HCT116 (cell line): ENCODE measurements at regions of chr10 and their contacts with region 1.

Region 1: GRCh38 chr10:3785257-3785850 is 345 bp upstream of the KLF6 start:
- DNase-seq: peak; percentile 91
- ATAC-seq: peak; percentile 81
- H3K4me3 ChIP-seq: peak overlapping the region; percentile 89 to 91
- H3K27ac ChIP-seq: peak overlapping the region; percentile 98
- H3K4me1 ChIP-seq: peaks cover 35 to 63% of the 10 kb centered on the region in 2 experiments
- H3K27me3 ChIP-seq: no peaks in the 10 kb centered on the region
- CTCF ChIP-seq: no peak
- POLR2A ChIP-seq: peak; percentile 82
- RAD21 ChIP-seq: no peak

Region 2: GRCh38 chr10:3797750-3798149 is 12.4 kb after region 1 on chr10:
- CTCF ChIA-PET with region 1: no interaction called
- POLR2A ChIA-PET with region 1: interaction called, 17 read pairs
- RAD21 ChIA-PET with region 1: no interaction called
- intact Hi-C with region 1: no loop called
- DNase-seq: no peak
- ATAC-seq: no peak
- H3K4me3 ChIP-seq: no peak overlapping the region
- H3K27ac ChIP-seq: no peak overlapping the region
- H3K4me1 ChIP-seq: peaks cover 0 to under 1% of the 10 kb centered on the region in 2 experiments; a peak in 1 of 4 replicates
- H3K27me3 ChIP-seq: no peaks in the 10 kb centered on the region
- CTCF ChIP-seq: no peak
- POLR2A ChIP-seq: no peak
- RAD21 ChIP-seq: no peak

Region 3: DNA sequence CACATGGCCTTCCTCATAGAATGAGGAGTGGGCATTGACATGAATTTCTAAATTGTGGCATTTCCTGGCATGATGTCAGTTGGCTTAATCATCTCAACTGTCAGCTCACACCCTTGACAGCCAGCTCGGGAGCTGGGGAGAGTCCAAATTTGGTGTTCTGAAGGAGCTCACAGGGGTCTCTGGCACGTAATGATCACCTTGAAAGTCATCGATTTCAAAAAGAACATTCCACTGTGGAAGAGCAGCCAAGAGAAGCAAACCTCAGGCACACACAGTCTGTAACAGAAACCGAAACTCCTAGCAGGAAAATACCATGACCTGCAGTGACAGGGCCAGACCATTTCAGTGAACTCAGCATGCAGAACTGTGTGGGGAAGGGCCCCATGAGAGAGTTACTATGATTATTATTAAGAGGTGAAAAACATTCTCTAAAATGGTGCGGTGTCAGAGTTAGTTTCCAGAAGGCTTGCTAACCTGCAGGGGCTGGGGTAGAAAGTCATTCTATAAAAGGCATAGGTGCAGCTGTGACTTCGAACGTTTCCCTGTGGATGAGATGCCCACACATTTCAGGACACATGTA is 26.0 kb after region 1 on chr10:
- CTCF ChIA-PET with region 1: interaction called, 3 read pairs
- POLR2A ChIA-PET with region 1: interaction called, 83 read pairs
- RAD21 ChIA-PET with region 1: interaction called in 1 of 2 experiments, 3 read pairs
- intact Hi-C with region 1: no loop called
- DNase-seq: no peak
- ATAC-seq: no peak
- H3K4me3 ChIP-seq: peak overlapping the region in 1 of 2 experiments; percentile 37; a peak in 2 of 4 replicates
- H3K27ac ChIP-seq: peak overlapping the region; percentile 78
- H3K4me1 ChIP-seq: peaks cover 43 to 68% of the 10 kb centered on the region in 2 experiments
- H3K27me3 ChIP-seq: no peaks in the 10 kb centered on the region
- CTCF ChIP-seq: no peak
- POLR2A ChIP-seq: no peak
- RAD21 ChIP-seq: no peak

Region 4: DNA sequence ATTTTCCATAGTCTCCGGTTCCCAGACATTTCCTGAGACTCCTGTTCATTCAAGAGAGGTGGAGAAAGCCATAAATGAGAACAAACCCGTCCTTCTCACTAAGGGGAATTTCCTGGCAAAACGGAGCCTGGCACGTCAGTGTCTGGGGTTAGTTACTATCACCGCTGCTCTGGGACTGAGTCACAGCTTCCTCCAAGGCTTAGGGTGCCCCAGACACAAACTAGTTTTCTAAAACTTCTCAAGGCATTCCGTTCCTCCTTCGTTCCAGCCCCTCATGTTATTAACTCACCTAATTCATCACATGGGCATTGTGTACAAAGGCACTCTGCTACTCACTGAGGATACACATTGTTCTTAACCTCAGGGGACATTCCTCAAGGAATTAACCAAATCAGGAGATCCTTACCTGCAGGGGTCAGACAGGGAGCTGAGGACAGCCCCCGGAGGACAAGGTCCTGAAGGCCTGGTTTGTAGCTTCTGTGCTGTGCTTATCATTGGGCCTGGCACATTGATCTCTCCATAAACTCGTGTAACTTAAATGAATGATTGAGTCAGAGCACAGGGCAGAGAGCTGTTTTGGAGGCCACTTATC is 102.6 kb after region 1 on chr10:
- CTCF ChIA-PET with region 1: no interaction called
- POLR2A ChIA-PET with region 1: interaction called, 22 read pairs
- RAD21 ChIA-PET with region 1: no interaction called
- intact Hi-C with region 1: no loop called
- DNase-seq: no peak
- ATAC-seq: peak; percentile 35
- H3K4me3 ChIP-seq: peak overlapping the region in 1 of 2 experiments; percentile 7; a peak in 1 of 4 replicates
- H3K27ac ChIP-seq: peak overlapping the region; percentile 49; the same call in 1 of the 2 replicates
- H3K4me1 ChIP-seq: peaks cover 27 to 65% of the 10 kb centered on the region in 2 experiments
- H3K27me3 ChIP-seq: no peaks in the 10 kb centered on the region
- CTCF ChIP-seq: peak in 1 of 3 experiments; percentile 10; a peak in 1 of 6 replicates
- POLR2A ChIP-seq: no peak
- RAD21 ChIP-seq: 0 out of 2 replicates have a peak, but pooled peaks have one; percentile 7

Region 5: GRCh38 chr10:4151466-4151865 is 366.1 kb after region 1 on chr10:
- CTCF ChIA-PET with region 1: interaction called, 3 read pairs
- POLR2A ChIA-PET with region 1: interaction called, 8 read pairs
- RAD21 ChIA-PET with region 1: no interaction called
- intact Hi-C with region 1: loop called (anchors 10 kb)
- DNase-seq: no peak
- ATAC-seq: peak; percentile 66
- H3K4me3 ChIP-seq: no peak overlapping the region
- H3K27ac ChIP-seq: no peak overlapping the region
- H3K4me1 ChIP-seq: peaks cover 0 to 4% of the 10 kb centered on the region in 2 experiments; a peak in 3 of 4 replicates
- H3K27me3 ChIP-seq: no peaks in the 10 kb centered on the region
- CTCF ChIP-seq: peak; percentile 19 to 51 (median 39); a peak in 5 of 6 replicates
- POLR2A ChIP-seq: no peak
- RAD21 ChIP-seq: peak; percentile 59

Region 6: DNA sequence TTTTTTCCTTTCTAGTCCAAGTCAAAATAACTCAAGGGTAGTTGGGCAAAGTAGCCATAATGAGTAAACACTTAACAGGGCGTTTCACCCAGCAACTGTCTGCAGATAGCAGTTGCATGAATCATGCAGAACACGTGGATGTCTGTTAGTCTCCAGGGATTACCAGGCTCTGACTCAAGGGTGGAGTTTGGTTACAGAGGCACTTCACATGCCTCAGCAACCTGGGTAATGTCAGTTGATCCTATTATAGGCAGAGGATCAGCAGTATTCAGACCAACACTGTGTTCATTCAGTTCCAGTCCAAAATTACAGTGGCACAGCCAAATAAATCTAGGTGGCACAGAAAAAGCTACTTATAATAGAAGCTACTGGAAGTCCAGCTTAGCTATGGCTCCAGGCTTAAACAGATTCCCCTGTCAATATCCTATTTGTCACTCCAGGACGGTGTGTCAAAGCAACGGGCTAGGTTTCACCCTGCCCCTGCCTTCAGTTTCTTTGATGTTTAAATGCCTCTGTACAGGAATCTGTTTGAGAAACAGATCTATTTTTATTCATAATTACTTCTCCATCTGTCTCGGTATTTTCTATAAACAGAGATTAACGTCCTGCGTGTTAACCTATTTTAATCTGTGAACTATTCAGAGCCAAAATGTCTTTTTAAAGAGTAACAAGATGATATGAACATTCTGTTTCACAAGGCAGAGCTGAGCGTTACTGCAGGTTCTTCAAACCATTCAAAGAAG is 878.0 kb after region 1 on chr10:
- CTCF ChIA-PET with region 1: no interaction called
- POLR2A ChIA-PET with region 1: interaction called, 3 read pairs
- RAD21 ChIA-PET with region 1: no interaction called
- intact Hi-C with region 1: loop called (anchors 5 kb)
- DNase-seq: peak; percentile 97
- ATAC-seq: peak; percentile 96
- H3K4me3 ChIP-seq: peak overlapping the region in 1 of 2 experiments; percentile 39; a peak in 3 of 4 replicates
- H3K27ac ChIP-seq: peak overlapping the region; percentile 81
- H3K4me1 ChIP-seq: peaks cover 20 to 37% of the 10 kb centered on the region in 2 experiments
- H3K27me3 ChIP-seq: no peaks in the 10 kb centered on the region
- CTCF ChIP-seq: no peak
- POLR2A ChIP-seq: peak; percentile 19
- RAD21 ChIP-seq: peak; percentile 35; the same call in 1 of the 2 replicates